CD4-positive, alpha-beta T cell (primary cell): ENCODE measurements at regions of chr7 and their contacts with region 1.

Region 1: GRCh38 chr7:18778594-18778993 is 283.0 kb downstream of the HDAC9 start:
- DNase-seq: no peak
- ATAC-seq: no peak
- H3K4me3 ChIP-seq: no peak overlapping the region
- H3K4me3 Mint-ChIP-seq: no peak overlapping the region
- H3K27ac ChIP-seq: no peak overlapping the region
- H3K27ac Mint-ChIP-seq: no peak overlapping the region
- H3K4me1 ChIP-seq: no peaks in the 10 kb centered on the region
- H3K4me1 Mint-ChIP-seq: no peaks in the 10 kb centered on the region
- H3K27me3 ChIP-seq: no peaks in the 10 kb centered on the region
- H3K27me3 Mint-ChIP-seq: no peaks in the 10 kb centered on the region
- CTCF ChIP-seq: no peak

Region 2: GRCh38 chr7:18644981-18645380 is 133.6 kb before region 1 on chr7:
- CTCF ChIA-PET with region 1: no interaction called
- POLR2A ChIA-PET with region 1: no interaction called
- intact Hi-C with region 1: loop called in 1 of 2 experiments (anchors 1 kb)
- DNase-seq: no peak
- ATAC-seq: no peak
- H3K4me3 ChIP-seq: no peak overlapping the region
- H3K4me3 Mint-ChIP-seq: no peak overlapping the region
- H3K27ac ChIP-seq: no peak overlapping the region
- H3K27ac Mint-ChIP-seq: no peak overlapping the region
- H3K4me1 ChIP-seq: no peaks in the 10 kb centered on the region
- H3K4me1 Mint-ChIP-seq: no peaks in the 10 kb centered on the region
- H3K27me3 ChIP-seq: no peaks in the 10 kb centered on the region
- H3K27me3 Mint-ChIP-seq: no peaks in the 10 kb centered on the region
- CTCF ChIP-seq: no peak

Region 3: GRCh38 chr7:18913106-18913505 is 134.5 kb after region 1 on chr7:
- CTCF ChIA-PET with region 1: no interaction called
- POLR2A ChIA-PET with region 1: no interaction called
- intact Hi-C with region 1: no loop called
- DNase-seq: no peak
- ATAC-seq: no peak
- H3K4me3 ChIP-seq: no peak overlapping the region
- H3K4me3 Mint-ChIP-seq: no peak overlapping the region
- H3K27ac ChIP-seq: no peak overlapping the region
- H3K27ac Mint-ChIP-seq: no peak overlapping the region
- H3K4me1 ChIP-seq: no peaks in the 10 kb centered on the region
- H3K4me1 Mint-ChIP-seq: no peaks in the 10 kb centered on the region
- H3K27me3 ChIP-seq: no peaks in the 10 kb centered on the region
- H3K27me3 Mint-ChIP-seq: no peaks in the 10 kb centered on the region
- CTCF ChIP-seq: no peak

Region 4: GRCh38 chr7:19482628-19483027 is 704.0 kb after region 1 on chr7:
- CTCF ChIA-PET with region 1: no interaction called
- POLR2A ChIA-PET with region 1: no interaction called
- intact Hi-C with region 1: no loop called
- DNase-seq: no peak
- ATAC-seq: no peak
- H3K4me3 ChIP-seq: no peak overlapping the region
- H3K4me3 Mint-ChIP-seq: no peak overlapping the region
- H3K27ac ChIP-seq: no peak overlapping the region
- H3K27ac Mint-ChIP-seq: no peak overlapping the region
- H3K4me1 ChIP-seq: no peaks in the 10 kb centered on the region
- H3K4me1 Mint-ChIP-seq: no peaks in the 10 kb centered on the region
- H3K27me3 ChIP-seq: no peaks in the 10 kb centered on the region
- H3K27me3 Mint-ChIP-seq: no peaks in the 10 kb centered on the region
- CTCF ChIP-seq: no peak